CD8-positive, alpha-beta T cell (primary cell): ENCODE measurements at regions of chr3 and their contacts with region 1.

Region 1: GRCh38 chr3:45870099-45870498 is 16.2 kb upstream of the CCR9 start:
- DNase-seq: peak; percentile 53 to 91 (median 72)
- ATAC-seq: peak; percentile 91
- H3K4me3 ChIP-seq: no peak overlapping the region
- H3K4me3 Mint-ChIP-seq: peak overlapping the region; percentile 40
- H3K27ac ChIP-seq: no peak overlapping the region
- H3K27ac Mint-ChIP-seq: peak overlapping the region; percentile 76
- H3K4me1 ChIP-seq: peaks cover 38% of the 10 kb centered on the region
- H3K4me1 Mint-ChIP-seq: peaks cover 52% of the 10 kb centered on the region
- H3K27me3 ChIP-seq: no peaks in the 10 kb centered on the region
- H3K27me3 Mint-ChIP-seq: peaks cover 17% of the 10 kb centered on the region
- CTCF ChIP-seq: no peak

Region 2: DNA sequence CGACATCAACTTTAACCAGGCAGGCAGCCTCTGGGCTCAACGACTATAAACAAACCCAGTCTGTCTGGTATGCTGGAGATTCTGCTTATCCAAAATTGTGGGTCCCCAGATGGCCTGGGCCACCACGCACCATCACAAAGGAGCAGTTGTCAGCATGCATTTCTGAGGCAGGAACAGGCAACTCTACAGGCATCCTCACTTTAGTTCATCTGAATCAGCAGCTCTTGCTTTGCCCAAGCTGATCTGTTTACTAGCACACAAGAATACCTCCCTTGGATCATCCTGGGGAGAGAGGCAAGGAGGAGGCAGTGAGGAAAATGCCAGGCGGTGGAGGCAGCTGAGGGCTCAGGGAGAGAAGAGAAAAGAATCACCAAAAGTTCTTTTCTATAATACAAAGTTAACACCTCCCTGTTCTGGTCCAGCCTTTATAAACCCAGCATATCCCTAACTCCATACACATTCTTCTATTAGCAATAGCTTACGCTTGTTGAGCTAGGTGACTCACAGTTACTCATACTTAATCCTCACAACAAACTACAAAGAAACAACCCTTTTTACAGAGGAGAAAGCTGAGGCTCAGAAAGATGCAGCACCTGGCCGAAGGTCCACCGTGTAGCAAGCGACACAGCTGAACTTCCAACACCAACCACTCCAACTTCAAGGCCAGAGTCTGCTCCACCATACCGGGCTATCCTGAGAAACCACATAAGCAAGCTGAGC is 927.7 kb before region 1 on chr3:
- CTCF ChIA-PET with region 1: no interaction called
- POLR2A ChIA-PET with region 1: no interaction called
- intact Hi-C with region 1: no loop called
- DNase-seq: no peak
- ATAC-seq: no peak
- H3K4me3 ChIP-seq: no peak overlapping the region
- H3K4me3 Mint-ChIP-seq: no peak overlapping the region
- H3K27ac ChIP-seq: no peak overlapping the region
- H3K27ac Mint-ChIP-seq: no peak overlapping the region
- H3K4me1 ChIP-seq: no peaks in the 10 kb centered on the region
- H3K4me1 Mint-ChIP-seq: no peaks in the 10 kb centered on the region
- H3K27me3 ChIP-seq: no peaks in the 10 kb centered on the region
- H3K27me3 Mint-ChIP-seq: no peaks in the 10 kb centered on the region
- CTCF ChIP-seq: no peak

Region 3: GRCh38 chr3:45417930-45418826 is 451.9 kb before region 1 on chr3:
- CTCF ChIA-PET with region 1: no interaction called
- POLR2A ChIA-PET with region 1: no interaction called
- intact Hi-C with region 1: no loop called
- DNase-seq: no peak
- ATAC-seq: no peak
- H3K4me3 ChIP-seq: no peak overlapping the region
- H3K4me3 Mint-ChIP-seq: no peak overlapping the region
- H3K27ac ChIP-seq: no peak overlapping the region
- H3K27ac Mint-ChIP-seq: no peak overlapping the region
- H3K4me1 ChIP-seq: no peaks in the 10 kb centered on the region
- H3K4me1 Mint-ChIP-seq: peaks cover 2% of the 10 kb centered on the region
- H3K27me3 ChIP-seq: no peaks in the 10 kb centered on the region
- H3K27me3 Mint-ChIP-seq: no peaks in the 10 kb centered on the region
- CTCF ChIP-seq: no peak

Region 4: DNA sequence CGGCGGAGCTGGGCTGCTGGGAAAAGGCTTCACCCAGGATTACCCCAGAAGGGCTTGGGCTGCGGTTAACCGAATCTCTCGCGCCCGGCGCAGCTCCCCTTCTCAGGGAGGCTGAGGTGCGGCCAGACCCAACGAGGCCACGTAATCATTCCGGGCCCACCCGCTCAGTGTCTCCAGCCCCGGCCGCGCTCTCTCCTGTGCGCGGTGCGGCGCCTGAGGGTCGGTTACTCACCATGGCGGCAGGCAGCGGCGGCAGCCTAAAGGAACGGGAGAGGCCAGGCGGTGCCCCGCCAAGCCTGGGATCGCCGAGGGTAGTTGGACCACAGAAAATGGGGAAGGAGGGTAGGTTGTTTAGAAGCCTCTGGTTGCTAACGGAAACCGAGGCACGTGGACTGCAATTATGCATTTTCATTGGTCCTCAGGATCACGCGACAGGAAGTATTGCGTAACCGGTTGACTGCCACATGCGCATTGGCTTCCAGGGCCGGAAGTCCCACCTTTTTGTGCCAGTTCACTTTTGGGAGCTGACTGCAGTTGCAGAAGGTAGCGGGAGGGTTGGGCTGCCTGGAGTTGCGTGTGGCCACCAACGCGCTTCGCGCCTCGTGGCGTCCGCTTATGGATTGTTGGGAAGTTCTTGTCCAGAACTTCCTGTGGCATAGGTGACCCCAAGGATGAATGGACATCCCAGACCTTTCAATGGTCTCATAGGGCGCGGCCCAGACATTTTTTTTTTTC is 28.2 kb before region 1 on chr3 and contains the start of gene LZTFL1:
- CTCF ChIA-PET with region 1: interaction called, 3 read pairs
- POLR2A ChIA-PET with region 1: interaction called, 4 read pairs
- intact Hi-C with region 1: loop called (anchors 1 kb)
- DNase-seq: peak; percentile 74 to 97 (median 91)
- ATAC-seq: peak; percentile 83
- H3K4me3 ChIP-seq: peak within 1 kb of the TSS; percentile 88 to 89
- H3K4me3 Mint-ChIP-seq: peak within 1 kb of the TSS; percentile 96
- H3K27ac ChIP-seq: peak within 1 kb of the TSS; percentile 89 to 93
- H3K27ac Mint-ChIP-seq: peak within 1 kb of the TSS; percentile 96
- H3K4me1 ChIP-seq: peaks cover 11% of the 10 kb centered on the region
- H3K4me1 Mint-ChIP-seq: peaks cover 16% of the 10 kb centered on the region
- H3K27me3 ChIP-seq: no peaks in the 10 kb centered on the region
- H3K27me3 Mint-ChIP-seq: no peaks in the 10 kb centered on the region
- CTCF ChIP-seq: no peak
- total RNA-seq, gene LZTFL1: 10.0 TPM

Region 5: DNA sequence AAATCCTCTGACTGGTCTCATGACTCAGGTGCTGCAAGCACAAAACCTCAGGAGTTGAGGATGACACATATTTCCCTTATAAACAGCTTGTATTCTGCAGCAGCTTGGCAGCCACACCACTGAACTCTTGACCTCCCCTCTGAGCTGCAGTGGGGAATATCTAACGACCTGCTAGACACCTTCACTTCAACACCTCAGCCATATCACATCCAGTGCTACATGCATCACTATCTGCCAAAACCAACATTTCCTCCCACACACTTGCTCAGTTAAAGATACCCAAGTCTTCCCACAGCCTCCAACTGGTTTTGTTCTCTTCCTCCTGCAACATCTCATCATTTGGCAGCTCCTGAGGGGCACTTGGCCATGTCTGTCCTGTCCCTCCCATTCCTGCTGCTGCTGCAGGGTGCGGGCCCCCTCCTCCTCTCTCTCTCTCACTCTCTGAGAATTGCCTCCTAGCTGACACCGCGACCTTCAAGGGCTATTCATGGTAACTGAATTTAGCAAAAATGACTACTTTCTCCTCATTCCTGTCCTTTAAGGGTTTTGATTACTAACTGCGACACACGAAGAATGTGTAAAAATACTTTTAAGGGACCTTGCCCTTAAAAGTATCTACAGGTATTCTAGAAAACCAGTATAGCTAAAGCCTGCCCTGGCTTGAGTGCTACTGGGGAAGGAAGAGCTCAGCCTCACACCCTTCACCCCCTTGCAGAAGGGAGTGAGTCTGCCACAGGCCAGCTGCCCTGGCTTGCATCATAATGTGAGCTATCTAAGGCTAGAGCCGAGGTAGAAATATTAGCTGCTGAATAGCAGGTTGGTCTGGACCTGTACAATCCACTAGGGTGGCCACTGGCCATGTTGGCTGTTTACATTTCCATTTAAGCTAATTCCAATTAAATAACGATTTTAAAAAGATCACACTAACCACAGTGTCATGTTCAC is 11.3 kb after region 1 on chr3:
- CTCF ChIA-PET with region 1: interaction called, 5 read pairs
- POLR2A ChIA-PET with region 1: interaction called, 7 read pairs
- intact Hi-C with region 1: loop called in 1 of 2 experiments (anchors 1 kb)
- DNase-seq: peak in 8 of 9 experiments; percentile 20 to 84 (median 54)
- ATAC-seq: peak; percentile 88
- H3K4me3 ChIP-seq: no peak overlapping the region
- H3K4me3 Mint-ChIP-seq: no peak overlapping the region
- H3K27ac ChIP-seq: no peak overlapping the region
- H3K27ac Mint-ChIP-seq: peak overlapping the region; percentile 69
- H3K4me1 ChIP-seq: peaks cover 11% of the 10 kb centered on the region
- H3K4me1 Mint-ChIP-seq: peaks cover 25% of the 10 kb centered on the region
- H3K27me3 ChIP-seq: no peaks in the 10 kb centered on the region
- H3K27me3 Mint-ChIP-seq: peaks cover 12% of the 10 kb centered on the region
- CTCF ChIP-seq: no peak

Region 6: DNA sequence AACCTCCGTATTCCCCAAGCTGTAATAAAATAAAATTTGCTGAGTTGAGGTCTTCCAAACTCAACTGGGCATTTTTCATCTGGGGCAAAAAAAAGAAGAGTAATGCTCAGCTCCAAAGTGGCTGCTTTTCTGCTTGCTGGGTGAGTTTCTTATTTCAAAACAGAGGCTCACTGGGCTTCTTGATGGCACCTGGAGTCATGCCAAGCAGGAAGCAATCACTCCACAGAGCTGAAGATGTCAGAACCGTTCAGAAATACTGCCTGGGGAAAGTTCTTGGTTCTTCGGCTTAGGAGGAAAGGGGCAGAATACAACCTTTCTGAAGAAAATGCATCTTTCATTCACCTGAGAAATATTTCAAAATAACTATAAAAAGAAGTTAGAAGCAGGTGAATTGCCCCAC is 20.3 kb after region 1 on chr3:
- CTCF ChIA-PET with region 1: interaction called, 3 read pairs
- POLR2A ChIA-PET with region 1: interaction called, 5 read pairs
- intact Hi-C with region 1: loop called in 1 of 2 experiments (anchors 2 kb)
- DNase-seq: peak in 5 of 9 experiments; percentile 23 to 66 (median 46)
- ATAC-seq: no peak
- H3K4me3 ChIP-seq: no peak overlapping the region
- H3K4me3 Mint-ChIP-seq: peak overlapping the region; percentile 45
- H3K27ac ChIP-seq: no peak overlapping the region
- H3K27ac Mint-ChIP-seq: no peak overlapping the region
- H3K4me1 ChIP-seq: peaks cover 22% of the 10 kb centered on the region
- H3K4me1 Mint-ChIP-seq: peaks cover 57% of the 10 kb centered on the region
- H3K27me3 ChIP-seq: no peaks in the 10 kb centered on the region
- H3K27me3 Mint-ChIP-seq: peaks cover 16% of the 10 kb centered on the region
- CTCF ChIP-seq: no peak

Region 7: DNA sequence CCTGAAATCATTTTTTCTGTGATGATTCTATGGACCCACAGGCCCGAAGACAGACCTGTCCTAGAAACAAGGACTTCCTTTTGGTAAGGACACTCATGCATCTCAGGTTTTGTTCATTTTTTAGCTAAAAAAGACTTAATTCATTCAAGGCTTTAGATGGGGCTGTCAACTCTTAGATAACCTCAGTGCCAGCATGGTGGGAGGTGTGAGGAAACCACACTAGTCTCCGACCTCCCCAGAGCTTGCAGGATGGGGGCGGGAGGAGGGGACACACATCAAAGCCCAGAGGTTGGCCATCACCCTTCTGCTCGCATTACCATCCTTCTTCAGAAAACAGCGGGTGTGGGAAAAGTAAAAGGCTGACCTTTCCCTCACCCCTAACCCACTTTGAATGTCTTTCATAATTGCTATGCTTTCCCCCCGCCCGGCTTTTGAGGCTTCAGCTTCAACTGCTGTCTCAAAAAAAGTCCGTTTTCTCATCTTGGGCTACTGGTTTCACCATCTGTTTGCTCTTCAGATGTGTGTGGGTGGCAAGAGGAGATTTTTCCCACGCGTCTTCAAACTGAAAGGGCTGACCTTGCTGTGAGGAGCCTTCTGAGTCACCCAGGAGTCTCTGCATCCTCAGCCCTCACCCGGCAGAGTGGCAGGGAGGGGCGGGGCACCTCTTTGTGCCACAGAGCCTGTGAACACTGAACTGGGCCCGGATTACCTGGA is 45.6 kb after region 1 on chr3:
- CTCF ChIA-PET with region 1: no interaction called
- POLR2A ChIA-PET with region 1: no interaction called
- intact Hi-C with region 1: loop called in 1 of 2 experiments (anchors 1 kb)
- DNase-seq: peak; percentile 35 to 86 (median 76)
- ATAC-seq: peak; percentile 86
- H3K4me3 ChIP-seq: peak overlapping the region; percentile 23 to 30
- H3K4me3 Mint-ChIP-seq: peak overlapping the region; percentile 77
- H3K27ac ChIP-seq: peak overlapping the region; percentile 2 to 67
- H3K27ac Mint-ChIP-seq: peak overlapping the region; percentile 75
- H3K4me1 ChIP-seq: peaks cover 20% of the 10 kb centered on the region
- H3K4me1 Mint-ChIP-seq: peaks cover 40% of the 10 kb centered on the region
- H3K27me3 ChIP-seq: no peaks in the 10 kb centered on the region
- H3K27me3 Mint-ChIP-seq: no peaks in the 10 kb centered on the region
- CTCF ChIP-seq: no peak